Gastrocnemius medialis (tissue), 4 donors: ENCODE measurements at regions of chr7 and their contacts with region 1.

Region 1: DNA sequence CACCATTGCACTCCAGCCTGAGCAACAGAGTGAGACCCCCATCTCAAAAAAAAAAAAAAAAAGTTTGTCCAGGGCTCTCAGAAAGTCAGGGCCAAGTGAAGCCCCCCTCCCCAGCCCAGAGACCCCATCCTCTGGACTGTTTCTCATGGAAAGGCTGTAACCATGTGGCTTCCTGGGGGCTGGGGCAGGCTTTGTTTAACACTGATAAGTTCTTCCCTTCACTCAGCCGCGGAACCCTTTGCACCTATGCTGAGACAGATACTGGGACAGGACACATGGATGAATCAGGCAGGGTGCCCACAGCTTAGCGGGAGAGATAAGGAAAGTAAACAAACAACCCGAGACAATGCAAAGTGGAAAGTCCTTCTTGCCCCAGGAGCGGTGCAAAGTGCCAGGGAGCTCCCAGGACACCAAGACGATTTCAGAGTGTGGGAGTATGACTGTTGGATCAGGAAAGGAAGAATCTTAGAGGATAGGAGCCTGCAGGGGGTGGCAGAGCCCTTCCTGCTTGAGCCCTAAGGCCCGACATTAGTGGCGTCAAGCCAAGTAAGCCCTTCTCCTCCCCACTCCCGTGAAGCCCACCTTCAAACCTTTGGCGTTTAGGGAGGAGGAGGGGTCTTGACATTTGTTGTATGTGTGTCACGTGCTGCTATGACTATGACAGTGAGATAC is 11.6 kb downstream of the MLXIPL start:
- DNase-seq: peak; percentile 75 to 82
- ATAC-seq: peak; percentile 68 to 73
- H3K4me3 ChIP-seq: no peak overlapping the region
- H3K27ac ChIP-seq: peak overlapping the region; percentile 75 to 87 (median 84)
- H3K4me1 ChIP-seq: peaks cover 32 to 43% of the 10 kb centered on the region in 2 donors
- H3K27me3 ChIP-seq: no peaks in the 10 kb centered on the region
- CTCF ChIP-seq: peak in 3 of 5 experiments; percentile 19 to 29 (median 28)
- POLR2A ChIP-seq: no peak

Region 2: DNA sequence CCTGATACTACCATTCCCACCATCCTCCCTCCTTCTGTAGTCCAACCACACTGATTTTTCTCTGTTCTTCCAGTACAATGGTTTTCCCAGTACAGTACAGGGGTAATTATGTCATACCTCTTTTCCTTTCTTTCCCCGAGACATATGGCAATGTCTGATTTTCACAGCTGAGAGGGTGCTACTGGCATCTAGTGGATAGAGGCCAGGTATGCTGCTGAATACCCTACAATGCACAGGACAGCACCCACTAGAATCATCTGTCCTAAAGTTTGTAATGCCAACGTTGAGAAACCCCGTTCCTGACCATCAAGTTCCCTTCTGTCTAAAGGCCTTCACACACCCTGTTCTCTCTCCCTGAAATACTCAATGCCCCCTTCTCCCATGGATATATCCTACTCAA is 111.4 kb before region 1 on chr7:
- in situ Hi-C with region 1: no loop called
- intact Hi-C with region 1: no loop called
- DNase-seq: no peak
- ATAC-seq: no peak
- H3K4me3 ChIP-seq: no peak overlapping the region
- H3K27ac ChIP-seq: no peak overlapping the region
- H3K4me1 ChIP-seq: peaks cover 0 to 7% of the 10 kb centered on the region in 2 donors
- H3K27me3 ChIP-seq: no peaks in the 10 kb centered on the region
- CTCF ChIP-seq: no peak
- POLR2A ChIP-seq: no peak

Region 3: DNA sequence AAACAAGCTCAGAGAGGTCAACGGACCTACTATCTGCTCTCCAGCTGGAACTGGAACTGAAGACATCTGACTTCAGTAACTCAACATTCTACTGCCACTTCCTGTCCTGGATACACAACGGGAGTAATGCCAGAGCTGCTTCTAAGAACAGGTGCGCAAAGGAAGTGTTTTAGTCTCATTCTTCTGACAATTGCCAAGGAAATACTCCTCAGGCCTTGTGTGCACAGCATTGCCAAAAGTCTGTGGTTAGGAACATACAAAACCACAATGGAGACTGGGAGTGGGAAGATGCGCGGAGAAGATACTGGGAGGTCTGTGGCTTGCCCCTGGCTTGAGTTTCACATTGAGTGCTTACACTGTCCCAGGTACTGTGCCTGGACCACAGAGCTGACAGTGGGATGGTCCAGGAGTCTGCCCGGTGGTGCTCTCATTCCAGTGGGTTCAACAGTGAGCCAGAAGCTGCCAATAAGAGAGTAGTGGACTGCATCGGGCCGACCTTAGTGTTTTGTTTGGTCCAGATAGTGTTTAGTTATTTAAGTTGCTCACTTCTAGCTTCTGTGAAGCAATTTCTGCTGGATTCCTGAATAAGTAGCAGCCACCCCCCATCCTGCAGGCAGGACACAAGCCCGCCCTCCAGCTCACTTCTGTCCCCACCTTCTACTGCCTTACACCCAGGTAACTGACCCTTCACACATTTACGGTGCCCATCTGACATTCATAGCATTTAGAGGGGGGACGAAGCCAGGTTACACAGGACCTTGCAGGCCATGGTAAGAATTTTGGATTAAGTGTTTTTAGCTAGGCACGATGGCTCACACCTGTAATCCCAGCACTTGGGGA is 44.7 kb before region 1 on chr7:
- in situ Hi-C with region 1: no loop called
- intact Hi-C with region 1: no loop called
- DNase-seq: peak in 1 of 2 donors; percentile 7
- ATAC-seq: no peak
- H3K4me3 ChIP-seq: no peak overlapping the region
- H3K27ac ChIP-seq: no peak overlapping the region
- H3K4me1 ChIP-seq: peaks cover 0 to 3% of the 10 kb centered on the region in 2 donors
- H3K27me3 ChIP-seq: no peaks in the 10 kb centered on the region
- CTCF ChIP-seq: no peak
- POLR2A ChIP-seq: no peak

Region 4: DNA sequence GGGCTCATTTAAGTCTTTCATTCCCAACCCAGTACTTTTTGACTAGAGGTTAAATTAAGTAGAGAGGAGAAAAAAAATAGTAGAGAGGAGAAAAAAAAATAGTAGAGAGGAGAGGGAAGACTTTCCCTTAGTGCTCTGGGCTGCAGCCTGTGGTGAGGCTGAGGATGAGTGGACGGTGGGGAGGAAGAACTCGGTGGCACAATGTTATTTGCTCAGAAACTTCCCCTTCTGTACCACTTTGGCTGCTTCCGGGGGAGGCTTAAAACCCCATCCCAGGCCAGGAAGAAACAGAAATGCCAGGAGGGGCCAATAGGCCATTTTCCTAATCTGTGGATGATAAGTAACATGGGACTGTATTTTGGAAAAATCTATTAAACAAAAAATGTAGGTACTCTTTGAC is 26.2 kb after region 1 on chr7:
- in situ Hi-C with region 1: no loop called
- intact Hi-C with region 1: no loop called
- DNase-seq: no peak
- ATAC-seq: no peak
- H3K4me3 ChIP-seq: no peak overlapping the region
- H3K27ac ChIP-seq: no peak overlapping the region
- H3K4me1 ChIP-seq: no peaks in the 10 kb centered on the region
- H3K27me3 ChIP-seq: peaks cover 0 to 7% (median 5%) of the 10 kb centered on the region in 3 donors
- CTCF ChIP-seq: no peak
- POLR2A ChIP-seq: no peak

Region 5: GRCh38 chr7:73667344-73668102 is 54.8 kb after region 1 on chr7 and contains the start of gene VPS37D:
- in situ Hi-C with region 1: loop called (anchors 5 to 10 kb)
- intact Hi-C with region 1: loop called (anchors 1 kb)
- DNase-seq: peak; percentile 72 to 79
- ATAC-seq: peak; percentile 95 to 98
- H3K4me3 ChIP-seq: peak within 1 kb of the TSS; percentile 55 to 66 (median 57)
- H3K27ac ChIP-seq: no peak within 1 kb of the TSS
- H3K4me1 ChIP-seq: peaks cover 3 to 8% of the 10 kb centered on the region in 2 donors
- H3K27me3 ChIP-seq: peaks cover 0 to 3% (median 0%) of the 10 kb centered on the region in 3 donors
- CTCF ChIP-seq: peak in 4 of 5 experiments; percentile 95 to 98 (median 97)
- POLR2A ChIP-seq: no peak
- total RNA-seq, gene VPS37D: 0.64 to 2.5 (median 1.4) TPM

Region 6: GRCh38 chr7:73683056-73683964 is 70.6 kb after region 1 on chr7 and contains the starts of genes BUD23 and DNAJC30:
- in situ Hi-C with region 1: no loop called
- intact Hi-C with region 1: loop called (anchors 5 kb)
- DNase-seq: peak; percentile 98
- ATAC-seq: peak; percentile 98
- H3K4me3 ChIP-seq: peak within 1 kb of the TSS; percentile 91 to 99 (median 94)
- H3K27ac ChIP-seq: peak within 1 kb of the TSS; percentile 83 to 96 (median 92)
- H3K4me1 ChIP-seq: peaks cover 36% of the 10 kb centered on the region in 2 donors
- H3K27me3 ChIP-seq: no peaks in the 10 kb centered on the region
- CTCF ChIP-seq: peak in 1 of 5 experiments; percentile 27
- POLR2A ChIP-seq: peak; percentile 84 to 89
- total RNA-seq, gene BUD23: 83.9 to 128 (median 114) TPM
- total RNA-seq, gene DNAJC30: 3.9 to 10.5 (median 5.6) TPM

Region 7: DNA sequence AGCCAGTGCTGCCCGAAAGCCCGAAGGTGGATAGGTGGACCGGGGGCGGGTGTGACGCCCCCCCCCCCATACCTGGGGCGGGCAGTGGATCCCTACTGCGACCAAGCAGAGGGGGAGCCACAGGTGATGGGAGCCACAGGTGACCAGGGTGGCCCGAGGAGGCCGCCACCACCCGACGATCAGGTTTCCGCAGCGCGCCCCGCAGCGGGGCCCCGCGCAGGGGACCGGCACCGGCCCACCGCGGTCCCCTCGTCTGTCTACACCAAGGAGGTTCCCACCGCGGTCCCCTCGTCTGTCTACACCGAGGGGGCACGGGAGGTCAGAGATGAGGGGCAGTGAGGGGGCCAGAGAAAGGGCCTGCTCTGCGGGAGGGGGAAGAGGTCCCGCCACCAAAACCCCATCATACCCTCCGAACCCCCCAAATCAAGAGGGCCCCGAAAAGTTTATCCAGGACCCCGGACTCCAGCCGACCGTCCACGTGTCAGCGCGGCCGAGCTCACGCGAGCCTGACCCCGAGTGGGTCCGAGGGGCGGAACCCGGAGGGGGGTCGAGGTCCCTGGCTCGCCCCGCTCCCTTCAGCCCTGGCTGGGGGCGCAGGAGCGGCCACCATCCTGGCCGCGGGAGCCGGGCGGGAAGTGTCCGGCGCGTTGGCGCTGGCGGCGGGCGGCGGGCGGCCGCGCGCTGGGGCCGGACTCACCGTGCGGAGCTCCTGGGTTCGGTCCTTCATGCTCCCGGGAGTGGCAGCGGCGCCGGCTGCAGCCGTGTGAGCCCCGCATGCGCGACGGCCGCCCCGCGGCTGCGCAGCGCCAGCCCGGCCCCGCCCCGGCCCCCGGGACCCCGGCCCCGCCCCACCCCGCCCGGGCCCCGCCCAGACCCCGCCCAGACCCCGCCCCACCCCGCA is 106.4 kb after region 1 on chr7 and contains the start of gene STX1A:
- in situ Hi-C with region 1: loop called in 2 of 4 experiments (anchors 5 to 10 kb)
- intact Hi-C with region 1: no loop called
- DNase-seq: peak; percentile 36 to 62
- ATAC-seq: peak; percentile 76 to 83
- H3K4me3 ChIP-seq: peak within 1 kb of the TSS; percentile 65 to 95 (median 81)
- H3K27ac ChIP-seq: peak within 1 kb of the TSS; percentile 43 to 78 (median 60)
- H3K4me1 ChIP-seq: peaks cover 10 to 28% of the 10 kb centered on the region in 2 donors
- H3K27me3 ChIP-seq: no peaks in the 10 kb centered on the region
- CTCF ChIP-seq: no peak
- POLR2A ChIP-seq: peak; percentile 51 to 72
- total RNA-seq, gene STX1A: 0.83 to 8.1 (median 3.2) TPM

Region 8: GRCh38 chr7:74173866-74174605 is 561.3 kb after region 1 on chr7 and contains the start of gene EIF4H:
- in situ Hi-C with region 1: no loop called
- intact Hi-C with region 1: loop called (anchors 5 kb)
- DNase-seq: peak; percentile 95 to 96
- ATAC-seq: peak; percentile 87 to 90
- H3K4me3 ChIP-seq: peak within 1 kb of the TSS; percentile 91 to 93 (median 92)
- H3K27ac ChIP-seq: peak within 1 kb of the TSS; percentile 94 to 99 (median 95)
- H3K4me1 ChIP-seq: peaks cover 44 to 48% of the 10 kb centered on the region in 2 donors
- H3K27me3 ChIP-seq: no peaks in the 10 kb centered on the region
- CTCF ChIP-seq: peak in 1 of 5 experiments; percentile 42
- POLR2A ChIP-seq: peak; percentile 97
- total RNA-seq, gene EIF4H: 247 to 430 (median 309) TPM

Region 9: GRCh38 chr7:74187915-74188630 is 575.3 kb after region 1 on chr7:
- in situ Hi-C with region 1: no loop called
- intact Hi-C with region 1: no loop called
- DNase-seq: peak; percentile 29 to 36
- ATAC-seq: peak; percentile 82 to 87
- H3K4me3 ChIP-seq: no peak overlapping the region
- H3K27ac ChIP-seq: peak overlapping the region; percentile 85 to 99 (median 94)
- H3K4me1 ChIP-seq: peaks cover 59 to 63% of the 10 kb centered on the region in 2 donors
- H3K27me3 ChIP-seq: no peaks in the 10 kb centered on the region
- CTCF ChIP-seq: no peak
- POLR2A ChIP-seq: peak in 1 of 2 donors; percentile 41